Transverse colon (tissue), 4 donors: ENCODE measurements at regions of chr12 and their contacts with region 1.

Region 1: GRCh38 chr12:54359033-54359761 is 5.1 kb downstream of the GPR84 start:
- DNase-seq: peak; percentile 96
- H3K4me3 ChIP-seq: peak overlapping the region; percentile 45 to 81 (median 53)
- H3K27ac ChIP-seq: peak overlapping the region; percentile 75 to 88 (median 82)
- H3K4me1 ChIP-seq: peaks cover 0 to 41% (median 21%) of the 10 kb centered on the region in 4 donors
- H3K27me3 ChIP-seq: no peaks in the 10 kb centered on the region
- CTCF ChIP-seq: no peak
- EP300 ChIP-seq: peak; percentile 19
- POLR2A ChIP-seq: peak; percentile 26

Region 2: GRCh38 chr12:54294152-54294952 is 64.8 kb before region 1 on chr12:
- in situ Hi-C with region 1: loop called in 1 of 4 experiments (anchors 10 kb)
- intact Hi-C with region 1: loop called (anchors 5 kb)
- DNase-seq: peak; percentile 75
- H3K4me3 ChIP-seq: no peak overlapping the region
- H3K27ac ChIP-seq: no peak overlapping the region
- H3K4me1 ChIP-seq: peaks cover 0 to 7% (median 0%) of the 10 kb centered on the region in 4 donors
- H3K27me3 ChIP-seq: peaks cover 10% of the 10 kb centered on the region
- CTCF ChIP-seq: peak; percentile 67 to 87 (median 80)
- EP300 ChIP-seq: no peak
- POLR2A ChIP-seq: no peak

Region 3: GRCh38 chr12:54329759-54330158 is 29.4 kb before region 1 on chr12:
- in situ Hi-C with region 1: no loop called
- intact Hi-C with region 1: loop called (anchors 2 kb)
- DNase-seq: no peak
- H3K4me3 ChIP-seq: no peak overlapping the region
- H3K27ac ChIP-seq: no peak overlapping the region
- H3K4me1 ChIP-seq: peaks cover 9 to 65% (median 37%) of the 10 kb centered on the region in 4 donors
- H3K27me3 ChIP-seq: no peaks in the 10 kb centered on the region
- CTCF ChIP-seq: no peak
- EP300 ChIP-seq: no peak
- POLR2A ChIP-seq: no peak

Region 4: DNA sequence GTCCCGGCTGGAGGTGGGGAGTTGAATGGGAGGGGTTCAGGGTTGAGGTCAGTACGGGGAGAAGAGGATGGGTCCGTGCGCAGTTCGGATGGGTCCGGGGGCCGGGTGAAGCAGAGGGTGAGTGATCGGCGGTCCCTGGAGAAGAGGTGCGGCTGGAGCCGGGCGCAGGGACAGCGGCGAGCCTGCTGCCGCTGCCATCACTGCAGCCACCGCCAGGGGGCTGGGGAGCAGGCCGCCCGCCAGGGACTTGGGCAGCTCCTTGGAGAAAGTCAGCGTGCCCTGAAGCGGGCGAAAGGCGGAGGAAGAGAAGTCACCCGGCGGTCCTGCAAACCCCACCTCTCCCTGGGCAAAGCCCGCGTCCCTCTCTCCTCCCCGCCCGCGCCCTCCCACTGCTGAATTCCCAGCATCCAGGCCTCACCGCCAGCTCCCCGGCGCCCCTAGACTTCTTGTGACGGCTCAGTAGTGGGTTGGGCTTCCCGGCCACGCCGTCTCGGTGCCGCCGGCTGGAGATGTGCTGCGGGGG is 11.1 kb after region 1 on chr12:
- in situ Hi-C with region 1: no loop called
- intact Hi-C with region 1: no loop called
- DNase-seq: peak; percentile 79
- H3K4me3 ChIP-seq: peak overlapping the region; percentile 13 to 49 (median 24)
- H3K27ac ChIP-seq: peak overlapping the region; percentile 39 to 63 (median 53)
- H3K4me1 ChIP-seq: peaks cover 0 to 58% (median 26%) of the 10 kb centered on the region in 4 donors
- H3K27me3 ChIP-seq: no peaks in the 10 kb centered on the region
- CTCF ChIP-seq: peak; percentile 87 to 93 (median 92)
- EP300 ChIP-seq: no peak
- POLR2A ChIP-seq: no peak